OCI-LY7 (cell line): ENCODE measurements at regions of chr1 and their contacts with region 1.

Region 1: GRCh38 chr1:28127617-28128257 is 39.3 kb upstream of the EYA3 start:
- DNase-seq: peak; percentile 53
- H3K4me3 ChIP-seq: peak overlapping the region; percentile 3
- H3K27ac ChIP-seq: peak overlapping the region; percentile 34
- H3K4me1 ChIP-seq: peaks cover 44% of the 10 kb centered on the region
- CTCF ChIP-seq: no peak

Region 2: GRCh38 chr1:28088168-28088961 is 39.4 kb before region 1 on chr1 and contains the start of gene EYA3:
- CTCF ChIA-PET with region 1: no interaction called
- POLR2A ChIA-PET with region 1: no interaction called
- intact Hi-C with region 1: no loop called
- DNase-seq: peak; percentile 99
- H3K4me3 ChIP-seq: peak within 1 kb of the TSS; percentile 75
- H3K27ac ChIP-seq: peak within 1 kb of the TSS; percentile 82
- H3K4me1 ChIP-seq: peaks cover 58% of the 10 kb centered on the region
- CTCF ChIP-seq: no peak
- total RNA-seq, gene EYA3: 24.1 and 29.0 TPM in 2 replicates

Region 3: GRCh38 chr1:28160782-28161266 is 33.1 kb after region 1 on chr1:
- CTCF ChIA-PET with region 1: no interaction called
- POLR2A ChIA-PET with region 1: interaction called, 12 read pairs
- intact Hi-C with region 1: no loop called
- DNase-seq: no peak
- H3K4me3 ChIP-seq: no peak overlapping the region
- H3K27ac ChIP-seq: no peak overlapping the region
- H3K4me1 ChIP-seq: peaks cover 39% of the 10 kb centered on the region
- CTCF ChIP-seq: no peak